Heart left ventricle (tissue), 16 donors: ENCODE measurements at regions of chr15 and their contacts with region 1.

Region 1: DNA sequence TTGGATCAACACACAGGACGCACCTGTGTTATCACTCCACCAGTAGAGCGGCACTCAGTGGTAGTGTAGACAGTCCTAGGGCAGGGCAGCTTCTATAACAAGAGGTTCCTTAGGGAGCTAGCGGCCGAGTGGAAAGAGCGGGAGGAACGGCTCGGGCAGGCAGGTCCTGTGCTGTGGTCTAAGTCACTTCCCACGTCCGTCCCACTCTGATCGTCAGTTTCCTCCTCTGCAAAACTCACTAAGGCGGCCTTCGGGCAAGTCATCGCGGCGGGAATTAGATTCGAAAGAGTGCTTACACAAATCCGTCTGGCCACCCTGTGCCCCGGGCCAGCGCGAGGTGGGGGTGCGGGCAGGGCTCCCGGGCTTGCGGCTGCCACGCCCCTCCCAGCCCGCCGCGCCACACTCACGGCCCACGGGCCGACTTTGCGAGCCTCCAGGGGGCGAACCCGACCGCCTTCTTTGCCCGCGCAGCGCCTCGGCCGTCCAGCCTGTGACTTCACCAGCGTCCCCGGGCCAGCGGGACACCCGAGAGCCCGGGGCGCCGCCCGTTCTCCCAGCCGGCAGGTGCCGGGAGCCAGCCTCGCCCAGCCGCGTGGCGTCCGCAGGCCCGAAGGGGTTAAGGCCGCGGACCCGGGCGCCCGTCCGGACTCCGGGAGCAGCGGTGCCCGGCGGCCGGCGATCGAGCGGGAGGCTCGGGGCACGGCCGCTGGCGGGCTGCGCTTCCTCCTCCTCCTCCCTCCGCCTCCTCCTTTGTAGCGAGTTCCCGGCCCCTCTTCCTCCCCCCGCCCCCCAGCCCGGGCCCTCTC is 416 bp upstream of the CORO2B start:
- DNase-seq: peak; percentile 77 to 88 (median 80)
- ATAC-seq: peak; percentile 32 to 86 (median 80)
- H3K4me3 ChIP-seq: peak overlapping the region; percentile 42 to 93 (median 69)
- H3K27ac ChIP-seq: peak overlapping the region; percentile 60 to 93 (median 80)
- H3K4me1 ChIP-seq: peaks cover 0 to 34% (median 18%) of the 10 kb centered on the region in 12 donors
- H3K27me3 ChIP-seq: peaks cover 0 to 25% (median 0%) of the 10 kb centered on the region in 9 donors
- CTCF ChIP-seq: peak; percentile 34 to 81 (median 68)
- POLR2A ChIP-seq: peak in 1 of 2 donors; percentile 27

Region 2: DNA sequence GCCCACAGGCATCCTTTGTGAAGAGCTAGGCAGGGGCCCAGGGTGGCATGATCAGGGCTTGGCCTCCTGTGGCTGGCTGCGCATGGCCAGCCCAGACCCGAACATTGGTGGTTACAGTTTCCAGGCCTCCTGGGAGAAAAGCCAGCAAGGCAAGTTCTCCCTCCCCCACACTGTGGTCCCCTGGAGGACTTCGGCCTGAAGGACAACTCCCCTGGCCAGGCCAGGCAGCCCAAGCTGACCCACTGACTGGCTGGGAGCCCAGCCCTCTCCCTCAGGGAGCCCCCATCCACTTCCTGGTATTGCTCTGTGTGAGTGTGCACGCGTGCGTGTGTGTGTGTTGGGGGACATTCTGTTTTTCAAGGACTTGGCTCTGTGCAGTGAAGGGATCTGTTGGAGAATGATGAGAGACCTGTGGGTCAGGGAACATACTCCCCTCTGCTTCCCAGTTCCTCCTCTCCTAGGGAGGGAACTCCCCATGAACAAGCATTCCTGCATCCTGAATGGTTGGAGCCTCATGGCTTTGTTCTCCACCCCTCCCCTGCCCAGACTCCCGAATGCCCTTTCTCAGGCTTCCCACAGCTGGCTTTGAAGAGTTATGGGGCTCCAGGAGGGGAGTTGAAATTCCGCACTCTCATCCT is 29.9 kb after region 1 on chr15:
- intact Hi-C with region 1: loop called in 1 of 10 experiments (anchors 2 kb)
- DNase-seq: peak; percentile 81 to 94 (median 91)
- ATAC-seq: peak; percentile 76 to 87 (median 85)
- H3K4me3 ChIP-seq: no peak overlapping the region
- H3K27ac ChIP-seq: peak overlapping the region; percentile 33 to 86 (median 68)
- H3K4me1 ChIP-seq: peaks cover 4 to 59% (median 35%) of the 10 kb centered on the region in 12 donors
- H3K27me3 ChIP-seq: no peaks in the 10 kb centered on the region
- CTCF ChIP-seq: no peak
- POLR2A ChIP-seq: no peak

Region 3: GRCh38 chr15:68620721-68621527 is 42.5 kb after region 1 on chr15:
- intact Hi-C with region 1: loop called in 3 of 10 experiments (anchors 5 kb)
- DNase-seq: peak; percentile 77 to 93 (median 88)
- ATAC-seq: peak; percentile 72 to 88 (median 85)
- H3K4me3 ChIP-seq: peak overlapping the region in 1 of 12 donors; percentile 6
- H3K27ac ChIP-seq: peak overlapping the region; percentile 27 to 77 (median 60)
- H3K4me1 ChIP-seq: peaks cover 0 to 58% (median 23%) of the 10 kb centered on the region in 12 donors
- H3K27me3 ChIP-seq: no peaks in the 10 kb centered on the region
- CTCF ChIP-seq: no peak
- POLR2A ChIP-seq: no peak

Region 4: GRCh38 chr15:68650901-68651709 is 72.7 kb after region 1 on chr15:
- intact Hi-C with region 1: loop called in 2 of 10 experiments (anchors 5 kb)
- DNase-seq: peak in 3 of 5 donors; percentile 52 to 80 (median 53)
- ATAC-seq: peak in 3 of 4 donors; percentile 47 to 52 (median 50)
- H3K4me3 ChIP-seq: no peak overlapping the region
- H3K27ac ChIP-seq: peak overlapping the region in 1 of 12 donors; percentile 68
- H3K4me1 ChIP-seq: peaks cover 0 to 19% (median 1%) of the 10 kb centered on the region in 12 donors
- H3K27me3 ChIP-seq: no peaks in the 10 kb centered on the region
- CTCF ChIP-seq: peak; percentile 39 to 80 (median 66)
- POLR2A ChIP-seq: no peak

Region 5: DNA sequence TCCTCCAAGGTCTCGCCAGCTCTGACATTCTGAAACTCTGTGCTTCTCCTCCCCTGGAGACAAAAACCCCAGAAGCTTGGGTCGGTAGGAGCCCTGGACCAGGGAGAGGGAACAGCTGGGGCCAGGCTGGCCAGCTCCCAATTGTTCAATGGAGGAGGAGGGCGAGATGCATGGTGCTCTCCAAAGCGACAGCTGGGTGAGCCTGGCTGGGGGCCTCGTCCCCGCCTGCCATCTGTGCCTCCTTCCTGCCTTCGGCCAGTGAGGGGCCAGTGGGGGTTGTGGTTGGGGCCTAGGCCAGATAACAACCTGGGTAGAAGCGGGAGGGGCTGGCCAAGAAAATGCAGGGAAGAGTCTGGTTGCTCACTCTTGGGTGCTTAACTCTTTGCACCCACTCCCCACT is 79.8 kb after region 1 on chr15:
- intact Hi-C with region 1: loop called in 2 of 10 experiments (anchors 5 kb)
- DNase-seq: peak in 1 of 5 donors; percentile 54
- ATAC-seq: peak in 3 of 4 donors; percentile 9 to 79 (median 36)
- H3K4me3 ChIP-seq: no peak overlapping the region
- H3K27ac ChIP-seq: no peak overlapping the region
- H3K4me1 ChIP-seq: peaks cover 0 to 5% (median 0%) of the 10 kb centered on the region in 12 donors
- H3K27me3 ChIP-seq: no peaks in the 10 kb centered on the region
- CTCF ChIP-seq: no peak
- POLR2A ChIP-seq: no peak

Region 6: DNA sequence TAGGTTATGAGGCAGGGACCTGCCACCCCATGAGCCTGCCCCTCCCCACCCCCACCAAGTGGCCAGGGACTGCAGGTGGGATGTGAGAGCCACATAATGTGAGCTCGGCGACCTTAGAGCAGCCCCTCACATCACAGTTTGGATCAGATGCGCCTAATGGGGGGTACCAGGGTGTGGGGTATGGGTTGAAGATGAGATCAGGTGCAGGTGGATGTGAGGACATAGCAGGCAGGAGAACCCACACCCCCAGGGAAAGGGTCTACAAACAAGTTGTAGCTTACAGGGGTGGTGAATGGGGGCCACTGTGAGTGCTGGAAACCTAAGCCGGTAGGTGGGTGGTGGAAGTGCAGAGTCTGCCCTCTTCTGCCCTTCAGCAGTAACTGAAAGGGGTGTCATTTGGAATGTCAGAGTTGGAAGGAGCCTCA is 94.4 kb after region 1 on chr15:
- intact Hi-C with region 1: loop called in 8 of 10 experiments (anchors 1 to 5 kb)
- DNase-seq: no peak
- ATAC-seq: no peak
- H3K4me3 ChIP-seq: no peak overlapping the region
- H3K27ac ChIP-seq: no peak overlapping the region
- H3K4me1 ChIP-seq: peaks cover 0 to 34% (median 10%) of the 10 kb centered on the region in 12 donors
- H3K27me3 ChIP-seq: no peaks in the 10 kb centered on the region
- CTCF ChIP-seq: peak in 3 of 12 donors; percentile 19 to 32 (median 20)
- POLR2A ChIP-seq: no peak